ENCODE measurements at regions of chr15 and their contacts with region 1.

Region 1: DNA sequence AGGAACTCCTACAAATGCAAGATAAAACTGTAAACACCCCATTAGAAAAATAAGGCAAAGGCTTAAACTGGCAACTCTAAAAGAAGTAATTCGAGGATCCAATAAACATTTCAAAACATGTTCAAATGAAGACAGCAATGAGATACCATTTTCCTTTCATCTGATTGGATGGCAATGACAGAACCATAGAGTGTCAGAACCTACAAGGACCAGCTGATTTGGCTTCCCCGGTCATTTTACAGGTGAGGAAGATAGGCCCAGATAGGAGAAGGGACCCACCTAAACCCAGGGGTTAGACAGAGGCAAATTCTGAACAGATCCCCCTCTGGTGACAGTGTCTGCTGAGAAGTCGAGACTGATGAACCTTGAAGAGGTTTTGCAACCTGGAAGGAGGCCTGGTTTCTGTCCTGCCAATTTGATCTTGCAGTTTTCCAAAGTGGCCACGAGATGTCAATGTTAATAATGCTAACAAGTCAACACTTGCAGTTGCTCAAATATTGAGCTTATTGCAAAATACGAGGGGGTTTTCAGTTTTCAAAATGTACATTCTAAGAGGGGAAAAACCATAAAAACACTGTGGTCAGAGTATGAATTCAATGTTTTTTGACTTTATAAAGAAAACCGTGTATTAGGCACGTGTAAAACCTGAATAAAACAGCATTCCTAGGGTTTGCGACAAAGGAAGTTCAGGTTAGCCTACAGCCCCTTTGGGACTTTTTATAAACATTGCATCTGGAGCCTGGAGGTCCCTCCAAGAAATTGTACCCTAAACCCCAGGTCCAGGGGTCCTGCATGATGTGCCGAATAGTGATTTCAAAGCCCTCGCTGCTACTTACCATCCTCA is 21.5 kb downstream of the CFAP161 start:
- DNase-seq: peak; percentile 48
- H3K4me3 ChIP-seq: no peak overlapping the region
- H3K27ac ChIP-seq: no peak overlapping the region
- H3K4me1 ChIP-seq: no peaks in the 10 kb centered on the region
- H3K27me3 ChIP-seq: no peaks in the 10 kb centered on the region
- CTCF ChIP-seq: peak; percentile 64

Region 2: DNA sequence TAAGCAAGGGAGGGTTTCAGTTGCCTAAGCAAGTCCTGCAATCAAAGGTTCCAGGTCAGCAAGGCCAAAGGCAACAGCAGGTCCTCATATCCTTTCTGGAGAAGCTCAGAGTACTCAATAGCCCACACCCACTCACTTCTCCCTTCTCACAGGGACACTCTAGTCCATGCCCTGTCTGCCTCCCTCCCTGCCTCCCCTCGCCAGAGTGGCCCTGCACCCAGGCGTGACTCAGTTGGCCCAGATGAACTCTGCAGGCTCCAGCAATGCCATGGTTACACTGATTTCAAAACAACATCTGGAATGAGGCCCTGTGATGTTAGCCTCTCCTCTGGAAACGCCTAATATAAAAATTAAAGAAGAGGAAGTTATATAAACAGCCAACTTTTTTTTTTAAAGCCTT is 74.0 kb after region 1 on chr15:
- CTCF ChIA-PET with region 1: no interaction called
- POLR2A ChIA-PET with region 1: no interaction called
- intact Hi-C with region 1: no loop called
- DNase-seq: no peak
- H3K4me3 ChIP-seq: no peak overlapping the region
- H3K27ac ChIP-seq: no peak overlapping the region
- H3K4me1 ChIP-seq: no peaks in the 10 kb centered on the region
- H3K27me3 ChIP-seq: no peaks in the 10 kb centered on the region
- CTCF ChIP-seq: no peak

Region 3: GRCh38 chr15:81256916-81257315 is 101.3 kb after region 1 on chr15:
- CTCF ChIA-PET with region 1: no interaction called
- POLR2A ChIA-PET with region 1: no interaction called
- intact Hi-C with region 1: loop called (anchors 2 kb)
- DNase-seq: peak; percentile 39
- H3K4me3 ChIP-seq: no peak overlapping the region
- H3K27ac ChIP-seq: no peak overlapping the region
- H3K4me1 ChIP-seq: no peaks in the 10 kb centered on the region
- H3K27me3 ChIP-seq: peaks cover 5% of the 10 kb centered on the region
- CTCF ChIP-seq: peak; percentile 50; the same call in 1 of the 2 replicates